PC-3 (cell line): ENCODE measurements at regions of chr11 and their contacts with region 1.

Region 1: GRCh38 chr11:133163463-133164419 is 368.6 kb downstream of the OPCML start:
- DNase-seq: peak; percentile 62
- ATAC-seq: peak; percentile 64
- H3K4me3 ChIP-seq: no peak overlapping the region
- H3K27ac ChIP-seq: no peak overlapping the region
- H3K4me1 ChIP-seq: no peaks in the 10 kb centered on the region
- H3K27me3 ChIP-seq: peaks cover 22% of the 10 kb centered on the region; the same call in 1 of the 2 replicates
- CTCF ChIP-seq: peak; percentile 74

Region 2: GRCh38 chr11:133078591-133079404 is 84.9 kb before region 1 on chr11:
- CTCF ChIA-PET with region 1: no interaction called
- POLR2A ChIA-PET with region 1: no interaction called
- intact Hi-C with region 1: loop called (anchors 1 kb)
- DNase-seq: peak; percentile 64
- ATAC-seq: peak; percentile 86
- H3K4me3 ChIP-seq: no peak overlapping the region
- H3K27ac ChIP-seq: no peak overlapping the region
- H3K4me1 ChIP-seq: no peaks in the 10 kb centered on the region
- H3K27me3 ChIP-seq: peaks cover 54% of the 10 kb centered on the region
- CTCF ChIP-seq: peak; percentile 92